A673 (cell line): ENCODE measurements at regions of chr2 and their contacts with region 1.

Region 1: DNA sequence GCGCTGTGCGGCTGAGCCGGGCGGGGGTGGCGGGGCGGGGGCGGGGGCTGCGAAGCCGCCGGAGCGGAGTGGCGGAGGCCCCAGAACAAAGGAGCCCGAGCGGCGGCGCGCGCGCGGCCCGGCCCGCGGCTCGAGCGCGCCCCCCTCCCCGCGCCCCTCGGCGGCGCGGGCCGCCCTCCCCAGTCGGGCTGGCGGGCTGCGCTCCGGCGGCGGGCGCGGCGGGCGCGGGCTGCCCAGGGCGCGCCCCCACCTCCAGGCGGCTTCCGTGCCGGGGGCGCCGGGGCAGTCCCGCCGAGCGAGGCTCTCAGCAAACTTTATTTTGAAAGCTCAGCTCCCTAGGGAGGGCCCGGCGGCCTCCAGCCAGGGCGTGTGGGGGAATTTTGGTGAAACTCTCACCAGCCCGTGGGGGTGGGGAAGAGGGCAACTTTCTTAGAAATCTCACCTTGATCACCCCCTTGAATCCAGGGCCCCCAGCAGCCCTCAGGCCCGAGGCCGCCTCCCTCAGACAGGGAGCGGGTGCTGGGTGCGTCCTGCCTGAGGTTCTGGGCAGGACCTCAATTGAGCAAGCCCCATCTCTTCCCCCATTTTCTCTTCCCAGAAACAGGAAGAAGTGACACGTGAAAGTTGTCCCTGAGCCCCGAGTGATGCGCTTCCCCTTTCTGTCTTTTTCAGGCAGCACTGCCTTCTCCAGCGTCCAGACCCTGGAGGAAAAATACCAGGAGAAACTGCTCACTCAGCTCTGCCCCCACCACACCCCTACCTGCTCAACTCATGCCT is 786 bp downstream of the TET3 start:
- DNase-seq: peak; percentile 57
- H3K4me3 ChIP-seq: peak overlapping the region; percentile 56
- H3K27ac ChIP-seq: peak overlapping the region; percentile 71
- H3K4me1 ChIP-seq: peaks cover 53% of the 10 kb centered on the region
- H3K27me3 ChIP-seq: no peaks in the 10 kb centered on the region
- CTCF ChIP-seq: no peak

Region 2: DNA sequence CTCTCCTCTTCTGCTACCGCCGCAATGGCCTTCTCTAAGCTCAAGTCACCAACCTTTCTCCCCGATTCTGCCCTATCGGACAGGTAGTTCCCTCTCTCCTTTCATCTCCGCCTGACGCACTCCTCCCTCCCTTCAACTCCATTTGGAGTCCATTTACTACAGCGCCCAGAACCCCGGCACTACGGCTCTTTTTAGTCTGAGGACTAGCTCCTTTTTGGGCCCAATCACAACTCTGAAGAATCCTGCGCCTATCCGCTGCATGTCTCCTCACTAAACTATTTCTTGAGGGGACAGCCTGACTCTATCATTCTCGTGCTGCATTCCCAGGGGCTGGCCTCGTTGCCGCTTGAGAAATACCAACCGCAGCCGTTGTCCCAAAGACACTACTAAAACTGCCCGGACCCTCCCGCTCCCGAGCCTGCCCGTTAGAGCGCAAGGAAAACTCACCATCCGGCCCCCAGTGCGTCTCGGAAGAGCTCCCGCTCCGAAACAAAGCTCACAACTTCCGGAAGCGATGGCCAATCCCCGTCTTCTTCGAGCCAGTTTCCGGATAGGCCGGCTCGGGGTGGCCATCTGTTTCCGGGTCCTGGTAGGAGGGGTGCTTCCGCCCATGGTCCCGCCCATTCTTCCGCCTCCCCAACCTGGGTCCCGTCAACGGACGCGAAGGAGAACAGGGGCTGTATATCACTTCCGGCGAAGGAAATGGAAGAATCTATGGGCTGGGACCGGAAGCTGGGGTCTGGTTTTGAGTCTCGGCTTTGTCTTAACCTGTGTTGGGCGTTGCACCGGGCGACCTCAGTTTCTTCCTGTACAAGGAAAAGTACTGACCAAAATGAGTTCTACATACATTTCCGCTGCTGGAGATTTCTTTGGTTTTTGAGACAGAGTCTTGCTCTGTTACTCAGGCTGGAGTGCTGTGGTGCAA is 248.4 kb before region 1 on chr2 and contains the start of gene TPRKB:
- CTCF ChIA-PET with region 1: no interaction called
- POLR2A ChIA-PET with region 1: interaction called, 15 read pairs
- intact Hi-C with region 1: no loop called
- DNase-seq: peak; percentile 99
- H3K4me3 ChIP-seq: peak within 1 kb of the TSS; percentile 91
- H3K27ac ChIP-seq: peak within 1 kb of the TSS; percentile 78
- H3K4me1 ChIP-seq: peaks cover 11% of the 10 kb centered on the region
- H3K27me3 ChIP-seq: no peaks in the 10 kb centered on the region
- CTCF ChIP-seq: no peak
- total RNA-seq, gene TPRKB: 57.3 and 57.5 TPM in 2 replicates

Region 3: GRCh38 chr2:73839652-73840411 is 145.7 kb before region 1 on chr2:
- CTCF ChIA-PET with region 1: no interaction called
- POLR2A ChIA-PET with region 1: no interaction called
- intact Hi-C with region 1: no loop called
- DNase-seq: no peak
- H3K4me3 ChIP-seq: no peak overlapping the region
- H3K27ac ChIP-seq: no peak overlapping the region
- H3K4me1 ChIP-seq: no peaks in the 10 kb centered on the region
- H3K27me3 ChIP-seq: no peaks in the 10 kb centered on the region
- CTCF ChIP-seq: no peak

Region 4: DNA sequence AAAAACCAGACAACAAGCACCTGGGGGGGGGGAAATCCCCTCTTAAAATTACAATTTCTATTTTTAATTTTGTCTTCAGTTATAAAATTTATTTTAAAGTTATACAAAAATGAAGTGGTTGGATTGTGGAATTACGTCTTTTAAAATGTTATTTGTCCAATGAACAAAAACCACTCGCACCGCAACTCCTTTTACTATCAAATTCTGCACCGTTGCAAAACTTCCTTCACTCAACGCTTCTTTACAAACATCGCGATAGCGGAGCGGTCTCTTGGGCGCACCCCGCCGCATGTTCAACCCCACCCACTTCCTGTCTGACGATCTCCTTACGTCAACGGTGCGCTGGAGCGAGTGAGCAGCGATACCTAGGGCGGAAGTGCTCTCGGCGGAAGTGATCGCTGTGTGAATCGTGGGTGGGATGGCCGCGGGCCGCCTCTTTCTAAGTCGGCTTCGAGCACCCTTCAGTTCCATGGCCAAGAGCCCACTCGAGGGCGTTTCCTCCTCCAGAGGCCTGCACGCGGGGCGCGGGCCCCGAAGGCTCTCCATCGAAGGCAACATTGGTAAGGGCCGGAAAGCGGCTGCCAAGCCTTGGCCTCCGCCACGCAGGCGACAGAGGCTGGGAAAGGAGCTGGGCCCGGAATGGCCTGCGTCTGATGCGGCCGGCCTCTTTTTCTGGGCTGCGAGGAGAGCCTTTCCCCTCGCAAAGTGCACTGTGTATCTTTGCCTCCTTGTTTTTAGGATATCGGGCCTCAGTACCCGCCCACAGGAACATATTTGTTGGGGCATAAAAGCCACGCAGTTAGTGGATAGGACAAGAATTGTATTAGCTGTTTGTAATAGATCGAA is 58.8 kb before region 1 on chr2 and contains the start of gene DGUOK:
- CTCF ChIA-PET with region 1: no interaction called
- POLR2A ChIA-PET with region 1: no interaction called
- intact Hi-C with region 1: loop called (anchors 5 kb)
- DNase-seq: peak; percentile 100
- H3K4me3 ChIP-seq: peak within 1 kb of the TSS; percentile 80
- H3K27ac ChIP-seq: peak within 1 kb of the TSS; percentile 96
- H3K4me1 ChIP-seq: peaks cover 12% of the 10 kb centered on the region
- H3K27me3 ChIP-seq: no peaks in the 10 kb centered on the region
- CTCF ChIP-seq: no peak
- total RNA-seq, gene DGUOK: 106 and 107 TPM in 2 replicates

Region 5: GRCh38 chr2:74104839-74105238 is 119.3 kb after region 1 on chr2:
- CTCF ChIA-PET with region 1: no interaction called
- POLR2A ChIA-PET with region 1: no interaction called
- intact Hi-C with region 1: loop called (anchors 10 kb)
- DNase-seq: no peak
- H3K4me3 ChIP-seq: no peak overlapping the region
- H3K27ac ChIP-seq: no peak overlapping the region
- H3K4me1 ChIP-seq: no peaks in the 10 kb centered on the region
- H3K27me3 ChIP-seq: no peaks in the 10 kb centered on the region
- CTCF ChIP-seq: peak; percentile 21; the same call in 1 of the 2 replicates